ENCODE measurements at regions of chr11 and their contacts with region 1.

Region 1: DNA sequence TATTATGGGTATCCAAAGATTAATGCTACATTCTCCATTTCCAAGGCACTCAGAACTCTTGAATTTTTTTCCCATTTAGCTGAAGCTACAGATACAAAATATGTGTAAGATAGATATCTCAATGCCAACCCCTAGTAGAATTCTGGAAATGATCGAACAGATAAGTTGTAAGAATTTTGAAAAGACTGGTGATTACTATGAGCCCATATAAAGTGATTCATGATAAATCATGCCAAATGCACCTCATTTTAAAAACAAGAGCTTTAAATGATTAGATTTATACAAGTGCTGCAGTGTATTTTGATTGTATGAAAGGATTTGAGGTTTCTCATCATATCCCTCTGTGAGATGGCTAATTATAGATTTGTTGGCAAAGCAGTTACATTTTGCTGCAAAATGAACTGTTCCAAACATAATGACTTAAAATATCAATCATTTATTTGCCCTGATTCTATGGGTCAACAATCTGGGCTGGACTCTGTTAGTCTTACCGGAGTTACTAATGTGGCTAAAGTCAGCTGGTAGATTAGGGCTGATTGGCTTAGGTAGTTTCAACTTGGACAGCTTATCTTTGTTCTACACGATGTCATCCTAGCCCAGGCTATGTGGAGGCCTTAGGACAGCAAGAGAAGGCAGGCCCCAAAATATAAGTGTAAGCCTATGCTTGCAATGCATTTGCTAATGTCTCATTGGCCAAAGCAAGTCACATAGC is 3.4 kb downstream of the OR10V1 start:
- DNase-seq: no peak
- ATAC-seq: no peak
- H3K4me3 ChIP-seq: no peak overlapping the region
- H3K27ac ChIP-seq: no peak overlapping the region
- H3K4me1 ChIP-seq: no peaks in the 10 kb centered on the region
- H3K27me3 ChIP-seq: peaks cover 0 to 2% (median 0%) of the 10 kb centered on the region in 3 donors
- CTCF ChIP-seq: no peak
- POLR2A ChIP-seq: no peak

Region 2: DNA sequence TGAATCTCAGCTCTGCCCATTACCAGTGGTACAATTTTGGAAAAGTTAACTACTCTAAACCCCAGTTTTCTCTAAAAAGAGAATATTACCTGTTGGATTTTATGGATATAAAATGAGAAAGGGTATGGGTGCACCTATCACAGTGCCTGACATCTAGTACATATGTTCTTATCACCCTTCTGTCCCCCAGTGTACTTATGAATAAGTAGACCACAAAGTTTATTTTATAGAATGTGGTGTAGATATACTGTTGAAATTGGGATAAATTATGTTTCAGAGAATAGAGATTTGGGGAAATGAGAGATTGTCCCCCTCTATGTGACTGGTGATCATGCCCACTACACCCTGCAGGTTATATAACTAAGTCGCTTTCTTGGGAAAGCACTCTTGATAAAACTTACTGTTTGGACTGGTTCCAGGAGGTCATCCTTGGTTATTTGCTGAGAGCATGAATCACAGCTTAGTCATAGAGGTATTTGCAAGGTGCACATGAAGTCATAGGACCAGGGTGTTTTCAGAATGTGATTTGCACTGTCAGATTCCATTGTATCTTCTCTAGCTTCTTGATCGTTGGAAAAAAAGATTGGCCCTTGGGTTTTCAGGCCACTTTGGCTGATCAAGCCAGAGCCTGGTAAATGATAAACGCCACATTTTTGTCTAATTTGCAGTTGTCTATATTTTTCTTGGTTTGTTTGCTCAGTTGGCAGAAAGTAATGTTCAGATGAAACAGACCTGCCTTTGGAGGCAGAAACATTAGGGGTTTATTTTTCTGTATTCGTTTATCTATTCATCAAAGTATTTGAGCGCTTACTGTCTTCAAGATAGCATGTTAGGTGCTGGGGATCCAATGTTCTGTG is 66.1 kb after region 1 on chr11:
- in situ Hi-C with region 1: loop called in 1 of 4 experiments (anchors 10 kb)
- intact Hi-C with region 1: no loop called
- DNase-seq: no peak
- ATAC-seq: peak in 1 of 2 donors; percentile 70
- H3K4me3 ChIP-seq: no peak overlapping the region
- H3K27ac ChIP-seq: peak overlapping the region in 1 of 4 donors; percentile 2
- H3K4me1 ChIP-seq: peaks cover 4 to 12% of the 10 kb centered on the region in 2 donors
- H3K27me3 ChIP-seq: no peaks in the 10 kb centered on the region
- CTCF ChIP-seq: no peak
- POLR2A ChIP-seq: no peak

Measured in gastrocnemius medialis (tissue), 4 donors.